Caco-2 (cell line): ENCODE measurements at regions of chr5 and their contacts with region 1.

Region 1: GRCh38 chr5:109409844-109410388 is at the start of gene PJA2:
- DNase-seq: peak; percentile 99
- H3K4me3 ChIP-seq: peak within 1 kb of the TSS; percentile 83
- H3K4me3 Mint-ChIP-seq: peak within 1 kb of the TSS; percentile 94
- H3K27ac Mint-ChIP-seq: peak within 1 kb of the TSS; percentile 100
- H3K4me1 ChIP-seq: peaks cover 8% of the 10 kb centered on the region; the same call in 1 of the 2 replicates
- H3K4me1 Mint-ChIP-seq: peaks cover 6% of the 10 kb centered on the region
- H3K27me3 ChIP-seq: no peaks in the 10 kb centered on the region
- H3K27me3 Mint-ChIP-seq: no peaks in the 10 kb centered on the region
- CTCF ChIP-seq: peak; percentile 9 to 38
- total RNA-seq, gene PJA2: 34.2 and 34.7 TPM in 2 replicates

Region 2: GRCh38 chr5:108381954-108382783 is 1027.7 kb before region 1 on chr5 and contains the start of gene FBXL17:
- CTCF ChIA-PET with region 1: no interaction called
- POLR2A ChIA-PET with region 1: no interaction called
- intact Hi-C with region 1: loop called (anchors 5 kb)
- DNase-seq: peak; percentile 95 to 96
- H3K4me3 ChIP-seq: peak within 1 kb of the TSS; percentile 100
- H3K4me3 Mint-ChIP-seq: peak within 1 kb of the TSS; percentile 72
- H3K27ac Mint-ChIP-seq: peak within 1 kb of the TSS; percentile 67
- H3K4me1 ChIP-seq: peaks cover 5% of the 10 kb centered on the region; the same call in 1 of the 2 replicates
- H3K4me1 Mint-ChIP-seq: peaks cover 20% of the 10 kb centered on the region
- H3K27me3 ChIP-seq: no peaks in the 10 kb centered on the region
- H3K27me3 Mint-ChIP-seq: no peaks in the 10 kb centered on the region
- CTCF ChIP-seq: no peak
- total RNA-seq, gene FBXL17: 11.6 and 12.5 TPM in 2 replicates

Region 3: DNA sequence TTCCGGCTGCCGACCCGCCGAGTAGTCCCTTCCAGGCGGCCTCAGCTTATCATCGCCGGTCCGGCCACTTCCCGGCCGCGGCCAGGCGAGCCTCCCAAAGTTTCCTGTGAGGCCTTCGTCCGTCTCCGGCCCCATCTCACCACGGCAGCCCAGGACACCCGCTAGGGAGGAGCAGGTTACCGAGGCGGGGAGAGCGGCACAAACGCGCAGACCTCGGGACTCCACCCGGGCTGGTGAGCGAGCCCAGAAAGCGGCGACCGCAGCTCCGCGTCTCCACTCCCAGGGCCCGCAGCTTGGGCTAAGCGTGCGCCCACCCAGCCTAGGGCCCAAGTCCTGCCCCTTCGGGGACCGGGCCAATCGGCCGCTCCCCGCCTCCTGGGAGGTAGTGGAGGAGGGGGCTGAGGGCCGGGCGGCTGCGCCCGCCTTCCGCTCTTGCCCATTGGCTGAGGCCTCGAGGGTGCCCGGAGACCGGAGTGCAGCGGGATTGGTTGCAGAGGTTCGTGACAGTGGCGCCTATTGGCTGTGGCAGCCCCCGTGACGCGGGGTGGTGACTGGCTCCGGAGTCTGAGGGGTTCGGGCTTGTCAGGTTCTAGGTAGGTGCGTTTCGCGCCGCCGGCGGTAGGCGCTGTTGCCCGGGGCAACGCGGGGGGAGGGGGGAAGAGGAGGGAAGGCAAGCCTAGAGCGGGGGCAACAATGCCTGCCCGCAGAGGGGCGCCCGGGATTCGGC is 661.4 kb before region 1 on chr5:
- CTCF ChIA-PET with region 1: no interaction called
- POLR2A ChIA-PET with region 1: no interaction called
- intact Hi-C with region 1: loop called (anchors 2 kb)
- DNase-seq: peak; percentile 99 to 100
- H3K4me3 ChIP-seq: peak overlapping the region; percentile 98
- H3K4me3 Mint-ChIP-seq: peak overlapping the region; percentile 90
- H3K27ac Mint-ChIP-seq: peak overlapping the region; percentile 93
- H3K4me1 ChIP-seq: peaks cover 24% of the 10 kb centered on the region
- H3K4me1 Mint-ChIP-seq: peaks cover 23% of the 10 kb centered on the region
- H3K27me3 ChIP-seq: no peaks in the 10 kb centered on the region
- H3K27me3 Mint-ChIP-seq: no peaks in the 10 kb centered on the region
- CTCF ChIP-seq: no peak

Region 4: DNA sequence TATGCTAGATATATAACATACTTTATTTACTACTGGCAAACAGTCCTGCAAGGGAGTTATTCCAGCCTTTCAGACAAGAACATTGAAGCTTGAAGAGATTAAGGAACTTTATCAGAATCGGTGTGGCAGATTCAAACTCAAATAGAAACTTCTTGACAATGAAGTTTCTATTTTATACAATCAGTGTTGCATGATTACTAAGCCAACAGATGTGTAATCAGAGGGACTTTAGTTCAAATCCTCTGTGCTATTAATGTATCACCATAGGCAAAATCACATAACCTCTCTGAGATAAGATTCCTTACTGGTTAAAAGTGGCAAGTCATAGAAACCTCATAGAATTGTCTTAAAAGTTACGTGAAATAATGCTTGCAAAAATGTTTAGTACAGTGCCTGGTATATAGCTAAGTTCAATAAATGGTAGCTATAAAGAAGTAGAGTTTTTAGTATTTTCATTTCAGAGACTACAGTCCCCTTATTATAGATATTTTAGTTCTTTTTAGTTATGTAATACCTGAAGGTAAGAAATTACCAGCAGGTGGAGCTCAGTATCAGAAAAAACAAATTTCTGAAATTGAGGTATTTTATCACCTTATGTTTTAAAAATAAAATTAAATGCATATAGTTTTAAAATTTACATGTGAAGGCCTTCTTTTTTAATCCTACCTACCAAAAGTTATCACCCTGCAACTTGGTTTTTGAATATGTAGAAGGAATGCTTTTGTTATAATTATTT is 490.2 kb before region 1 on chr5:
- CTCF ChIA-PET with region 1: no interaction called
- POLR2A ChIA-PET with region 1: no interaction called
- intact Hi-C with region 1: loop called (anchors 10 kb)
- DNase-seq: no peak
- H3K4me3 ChIP-seq: no peak overlapping the region
- H3K4me3 Mint-ChIP-seq: no peak overlapping the region
- H3K27ac Mint-ChIP-seq: no peak overlapping the region
- H3K4me1 ChIP-seq: peaks cover 8% of the 10 kb centered on the region; the same call in 1 of the 2 replicates
- H3K4me1 Mint-ChIP-seq: peaks cover 16% of the 10 kb centered on the region
- H3K27me3 ChIP-seq: no peaks in the 10 kb centered on the region
- H3K27me3 Mint-ChIP-seq: no peaks in the 10 kb centered on the region
- CTCF ChIP-seq: peak; percentile 18 to 42

Region 5: GRCh38 chr5:109468737-109469420 is 59.0 kb after region 1 on chr5:
- CTCF ChIA-PET with region 1: no interaction called
- POLR2A ChIA-PET with region 1: no interaction called
- intact Hi-C with region 1: loop called (anchors 1 kb)
- DNase-seq: peak; percentile 77 to 87
- H3K4me3 ChIP-seq: no peak overlapping the region
- H3K4me3 Mint-ChIP-seq: no peak overlapping the region
- H3K27ac Mint-ChIP-seq: no peak overlapping the region
- H3K4me1 ChIP-seq: no peaks in the 10 kb centered on the region
- H3K4me1 Mint-ChIP-seq: no peaks in the 10 kb centered on the region
- H3K27me3 ChIP-seq: no peaks in the 10 kb centered on the region
- H3K27me3 Mint-ChIP-seq: peaks cover 3% of the 10 kb centered on the region
- CTCF ChIP-seq: peak; percentile 66 to 78